BJ (cell line): ENCODE measurements at regions of chr12 and their contacts with region 1.

Region 1: DNA sequence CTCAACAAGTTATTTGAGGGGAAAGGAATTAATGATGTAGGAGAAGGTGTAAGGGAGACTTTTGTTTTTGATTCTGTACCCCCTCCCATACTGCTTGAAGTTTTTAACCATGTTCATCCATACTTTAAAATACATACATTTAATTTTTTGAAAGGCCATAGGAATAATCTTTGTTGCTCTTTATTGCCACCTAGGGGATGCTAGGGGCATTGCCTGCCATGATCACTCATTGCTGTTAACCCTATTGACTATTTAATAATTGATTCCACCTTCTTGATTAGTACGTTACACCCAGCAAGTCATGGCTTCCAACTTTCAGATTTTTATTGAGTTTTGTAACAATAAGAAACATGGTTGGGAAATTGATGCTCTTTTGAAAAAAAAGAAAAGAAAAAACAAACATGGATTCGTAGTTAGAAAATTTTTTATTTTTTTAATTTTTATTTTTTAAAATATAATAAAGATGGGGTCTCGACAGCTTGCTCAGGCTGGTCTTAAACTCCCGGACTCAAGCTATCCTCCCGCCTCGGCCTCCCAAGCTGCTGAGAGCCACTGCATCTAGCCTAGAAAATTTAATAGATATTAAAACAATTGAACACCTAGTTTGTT is 8.5 kb upstream of the PRKAB1 start:
- DNase-seq: no peak
- H3K4me3 ChIP-seq: no peak overlapping the region
- H3K27me3 ChIP-seq: no peaks in the 10 kb centered on the region
- CTCF ChIP-seq: peak; percentile 92

Region 2: GRCh38 chr12:118574288-118574687 is 1085.1 kb before region 1 on chr12:
- CTCF ChIA-PET with region 1: no interaction called
- POLR2A ChIA-PET with region 1: no interaction called
- DNase-seq: no peak
- H3K4me3 ChIP-seq: no peak overlapping the region
- H3K27me3 ChIP-seq: no peaks in the 10 kb centered on the region
- CTCF ChIP-seq: no peak

Region 3: DNA sequence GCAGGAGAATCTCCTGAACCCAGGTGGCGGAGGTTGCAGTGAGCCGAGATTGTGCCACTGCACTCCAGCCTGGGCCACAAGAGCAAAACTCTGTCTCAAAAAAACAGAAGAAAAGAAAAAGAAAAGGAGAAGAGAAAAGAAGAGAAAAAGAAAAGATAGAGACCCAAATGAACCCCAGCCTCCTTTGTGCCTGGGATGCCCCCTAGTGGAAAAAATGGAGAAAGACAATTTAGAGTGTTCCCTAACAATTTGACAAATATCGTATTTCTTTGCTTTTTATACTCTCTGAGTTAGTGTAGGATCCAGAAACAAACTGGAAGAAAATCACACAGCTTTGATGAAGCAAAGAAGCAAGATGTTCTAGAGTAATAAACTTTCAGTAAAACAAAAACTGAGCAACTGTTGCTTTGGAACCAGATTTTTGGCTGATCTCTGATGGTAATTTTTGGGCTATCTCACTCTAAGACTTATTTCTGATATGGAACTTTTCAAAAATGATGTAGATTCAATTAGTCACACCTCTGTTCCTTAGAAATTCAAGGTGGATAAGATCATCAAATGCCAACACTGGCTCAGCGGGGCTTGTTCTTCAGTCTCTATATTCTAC is 10.1 kb before region 1 on chr12:
- CTCF ChIA-PET with region 1: interaction called, 13 read pairs
- POLR2A ChIA-PET with region 1: no interaction called
- DNase-seq: no peak
- H3K4me3 ChIP-seq: no peak overlapping the region
- H3K27me3 ChIP-seq: no peaks in the 10 kb centered on the region
- CTCF ChIP-seq: peak; percentile 57